ENCODE measurements at regions of chr16 and their contacts with region 1.

Region 1: DNA sequence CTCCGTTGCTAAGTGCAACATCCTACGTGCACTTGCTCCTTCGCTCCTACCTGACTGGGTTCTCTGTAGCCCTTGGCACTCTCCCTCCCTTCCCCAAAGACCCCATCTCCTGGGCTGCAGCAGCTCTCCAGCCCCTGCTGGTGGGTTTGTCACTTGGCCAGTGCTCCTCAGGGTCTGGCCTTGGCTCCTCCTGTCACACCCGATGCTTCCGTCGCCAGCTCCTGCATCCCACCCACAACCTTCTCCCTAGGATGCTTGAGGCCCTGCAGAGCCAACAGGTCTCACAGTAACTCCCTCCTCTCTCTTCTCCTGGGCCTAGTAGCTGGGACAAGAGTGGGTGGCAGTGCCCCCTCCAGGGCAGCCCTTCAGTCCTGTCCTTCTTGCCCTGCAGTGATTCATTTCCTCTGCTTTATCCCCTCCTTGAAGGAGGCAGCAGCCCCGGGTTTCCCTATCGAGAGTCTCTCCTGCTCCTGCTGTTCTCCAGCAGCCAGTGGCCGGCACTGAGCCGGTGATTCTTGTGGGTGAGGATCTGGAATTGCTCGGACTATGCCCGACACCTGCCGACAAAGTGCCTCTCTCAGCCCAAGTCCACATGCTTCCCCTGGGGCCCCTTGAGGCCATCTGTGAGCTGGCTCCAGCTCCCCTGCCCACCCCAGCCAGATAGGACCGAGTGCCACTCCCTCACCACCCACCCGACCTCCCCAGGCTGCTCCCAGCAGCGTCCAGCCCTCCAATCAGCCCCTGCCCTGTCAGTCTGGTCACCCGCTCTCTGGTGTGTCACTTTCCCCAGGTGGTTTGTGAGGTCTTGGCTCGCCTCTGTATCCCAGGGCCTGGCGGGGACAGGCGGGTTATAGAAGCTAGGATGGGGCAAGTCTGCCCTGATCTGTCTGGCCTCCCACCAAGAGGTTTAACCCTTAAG is 3.8 kb downstream of the LITAFD start:
- DNase-seq: peak; percentile 51
- ATAC-seq: peak; percentile 40
- H3K4me3 ChIP-seq: no peak overlapping the region
- H3K27ac ChIP-seq: no peak overlapping the region
- H3K4me1 ChIP-seq: peaks cover 27% of the 10 kb centered on the region
- H3K27me3 ChIP-seq: no peaks in the 10 kb centered on the region
- CTCF ChIP-seq: 0 out of 2 replicates have a peak, but pooled peaks have one; percentile 19
- POLR2A ChIP-seq: no peak
- RAD21 ChIP-seq: no peak

Region 2: GRCh38 chr16:8655184-8655717 is 230.7 kb before region 1 on chr16:
- CTCF ChIA-PET with region 1: no interaction called
- POLR2A ChIA-PET with region 1: no interaction called
- dilution Hi-C with region 1: no loop called
- in situ Hi-C with region 1: loop called (anchors 5 kb)
- intact Hi-C with region 1: no loop called
- DNase-seq: peak; percentile 35
- ATAC-seq: peak; percentile 63
- H3K4me3 ChIP-seq: no peak overlapping the region
- H3K27ac ChIP-seq: no peak overlapping the region
- H3K4me1 ChIP-seq: no peaks in the 10 kb centered on the region
- H3K27me3 ChIP-seq: peaks cover 2% of the 10 kb centered on the region; the same call in 1 of the 2 replicates
- CTCF ChIP-seq: peak; percentile 51
- POLR2A ChIP-seq: no peak
- RAD21 ChIP-seq: peak; percentile 40

Region 3: DNA sequence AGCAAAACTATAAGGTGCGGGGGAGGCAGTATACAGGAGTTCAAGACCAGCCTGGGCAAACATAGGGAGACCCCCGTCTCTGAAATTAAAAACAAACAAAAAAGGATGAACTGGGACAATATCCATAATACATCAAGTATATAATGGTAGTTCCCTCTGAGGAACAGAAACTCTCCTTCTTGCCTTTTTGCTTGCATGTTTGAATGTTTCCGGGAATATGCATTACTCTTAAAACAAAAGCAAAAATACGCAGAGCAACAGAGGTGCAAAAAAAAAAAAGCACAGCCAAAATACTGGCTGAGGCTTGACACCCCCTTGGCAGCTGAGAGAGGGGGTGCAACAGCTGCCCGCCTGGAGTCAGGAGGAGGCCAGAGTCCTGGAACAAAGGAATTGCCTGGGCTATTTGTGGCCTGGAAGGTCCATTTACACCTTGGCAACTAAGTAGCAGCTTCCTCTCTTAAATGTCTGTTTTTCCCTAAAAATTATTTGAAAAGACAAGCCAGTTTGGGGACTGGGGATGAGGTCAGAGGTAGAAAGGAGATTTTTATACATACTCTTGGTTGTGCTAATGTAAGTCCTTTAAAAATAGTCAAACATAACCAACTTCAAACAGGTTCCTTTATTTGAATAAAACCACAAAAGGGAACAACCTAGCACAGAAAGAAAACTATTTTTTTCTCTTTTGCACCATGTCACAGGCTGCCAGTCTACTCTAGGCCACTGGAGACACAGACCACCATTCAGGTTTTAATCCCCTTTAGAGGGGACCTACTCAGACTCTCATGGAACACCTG is 58.2 kb after region 1 on chr16:
- CTCF ChIA-PET with region 1: no interaction called
- POLR2A ChIA-PET with region 1: no interaction called
- dilution Hi-C with region 1: no loop called
- in situ Hi-C with region 1: no loop called
- intact Hi-C with region 1: loop called (anchors 10 kb)
- DNase-seq: no peak
- ATAC-seq: no peak
- H3K4me3 ChIP-seq: no peak overlapping the region
- H3K27ac ChIP-seq: no peak overlapping the region
- H3K4me1 ChIP-seq: peaks cover 2% of the 10 kb centered on the region; the same call in 1 of the 2 replicates
- H3K27me3 ChIP-seq: no peaks in the 10 kb centered on the region
- CTCF ChIP-seq: no peak
- POLR2A ChIP-seq: no peak
- RAD21 ChIP-seq: no peak

Region 4: GRCh38 chr16:9008601-9009260 is 122.8 kb after region 1 on chr16:
- CTCF ChIA-PET with region 1: interaction called, 4 read pairs
- POLR2A ChIA-PET with region 1: no interaction called
- dilution Hi-C with region 1: no loop called
- in situ Hi-C with region 1: no loop called
- intact Hi-C with region 1: loop called (anchors 5 kb)
- DNase-seq: peak; percentile 56
- ATAC-seq: peak; percentile 97
- H3K4me3 ChIP-seq: no peak overlapping the region
- H3K27ac ChIP-seq: no peak overlapping the region
- H3K4me1 ChIP-seq: peaks cover 2% of the 10 kb centered on the region; the same call in 1 of the 2 replicates
- H3K27me3 ChIP-seq: no peaks in the 10 kb centered on the region
- CTCF ChIP-seq: peak; percentile 76
- POLR2A ChIP-seq: peak; percentile 30; the same call in 1 of the 2 replicates
- RAD21 ChIP-seq: peak; percentile 81

Region 5: DNA sequence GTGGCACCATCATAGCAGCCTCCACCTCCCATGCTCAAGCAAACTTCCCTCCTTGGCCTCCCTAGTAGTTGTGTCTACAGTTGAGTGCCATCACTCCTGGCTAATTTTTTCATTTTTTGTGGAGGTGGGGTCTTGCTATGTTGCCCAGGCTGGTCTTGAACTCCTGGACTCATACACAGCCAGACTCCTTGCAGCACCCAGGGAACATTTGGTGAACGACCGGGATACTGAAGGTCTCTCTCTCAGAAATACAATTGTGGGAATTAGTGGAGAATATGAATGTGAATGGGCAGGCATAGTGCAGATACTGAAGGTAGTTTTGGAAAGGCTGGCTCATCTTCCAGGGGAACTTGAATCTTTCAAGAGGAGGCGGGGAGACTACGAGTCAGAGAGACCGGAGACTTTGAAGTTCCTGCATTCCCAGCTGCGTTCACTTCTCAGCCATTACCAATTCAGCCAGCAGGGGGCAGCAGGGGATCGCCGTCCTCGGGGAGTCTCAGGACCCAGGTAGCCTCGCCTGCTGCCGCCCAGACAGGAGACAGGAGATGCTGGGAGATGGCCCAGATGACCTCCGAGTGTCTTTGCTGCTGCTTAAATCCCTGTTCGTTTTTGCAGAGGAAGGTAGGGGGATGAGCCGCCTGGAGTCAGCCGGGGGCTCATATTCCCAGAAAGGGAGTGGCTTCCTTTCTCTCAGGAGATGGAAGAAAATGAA is 274.1 kb after region 1 on chr16:
- CTCF ChIA-PET with region 1: no interaction called
- POLR2A ChIA-PET with region 1: no interaction called
- dilution Hi-C with region 1: no loop called
- in situ Hi-C with region 1: no loop called
- intact Hi-C with region 1: no loop called
- DNase-seq: peak; percentile 66
- ATAC-seq: peak; percentile 99
- H3K4me3 ChIP-seq: no peak overlapping the region
- H3K27ac ChIP-seq: no peak overlapping the region
- H3K4me1 ChIP-seq: no peaks in the 10 kb centered on the region
- H3K27me3 ChIP-seq: no peaks in the 10 kb centered on the region
- CTCF ChIP-seq: peak; percentile 83
- POLR2A ChIP-seq: no peak
- RAD21 ChIP-seq: peak; percentile 81

Measured in IMR-90 (cell line).